Activated naive CD4-positive, alpha-beta T cell treated with anti-CD3 and anti-CD28 coated beads for 36 hours (primary cell): ENCODE measurements at regions of chr18 and their contacts with region 1.

Region 1: GRCh38 chr18:12657684-12658425 is at the start of gene SPIRE1:
- DNase-seq: peak; percentile 34
- H3K4me3 Mint-ChIP-seq: peak within 1 kb of the TSS; percentile 76
- H3K27ac Mint-ChIP-seq: no peak within 1 kb of the TSS
- H3K4me1 Mint-ChIP-seq: peaks cover 7% of the 10 kb centered on the region
- H3K27me3 Mint-ChIP-seq: peaks cover 22% of the 10 kb centered on the region
- total RNA-seq, gene SPIRE1: 1.3 to 1.7 TPM

Region 2: GRCh38 chr18:12271376-12272235 is 386.2 kb before region 1 on chr18:
- CTCF ChIA-PET with region 1: no interaction called
- intact Hi-C with region 1: loop called (anchors 5 kb)
- DNase-seq: peak; percentile 68
- H3K4me3 Mint-ChIP-seq: peak overlapping the region; percentile 64
- H3K27ac Mint-ChIP-seq: no peak overlapping the region
- H3K4me1 Mint-ChIP-seq: no peaks in the 10 kb centered on the region
- H3K27me3 Mint-ChIP-seq: peaks cover 2% of the 10 kb centered on the region

Region 3: DNA sequence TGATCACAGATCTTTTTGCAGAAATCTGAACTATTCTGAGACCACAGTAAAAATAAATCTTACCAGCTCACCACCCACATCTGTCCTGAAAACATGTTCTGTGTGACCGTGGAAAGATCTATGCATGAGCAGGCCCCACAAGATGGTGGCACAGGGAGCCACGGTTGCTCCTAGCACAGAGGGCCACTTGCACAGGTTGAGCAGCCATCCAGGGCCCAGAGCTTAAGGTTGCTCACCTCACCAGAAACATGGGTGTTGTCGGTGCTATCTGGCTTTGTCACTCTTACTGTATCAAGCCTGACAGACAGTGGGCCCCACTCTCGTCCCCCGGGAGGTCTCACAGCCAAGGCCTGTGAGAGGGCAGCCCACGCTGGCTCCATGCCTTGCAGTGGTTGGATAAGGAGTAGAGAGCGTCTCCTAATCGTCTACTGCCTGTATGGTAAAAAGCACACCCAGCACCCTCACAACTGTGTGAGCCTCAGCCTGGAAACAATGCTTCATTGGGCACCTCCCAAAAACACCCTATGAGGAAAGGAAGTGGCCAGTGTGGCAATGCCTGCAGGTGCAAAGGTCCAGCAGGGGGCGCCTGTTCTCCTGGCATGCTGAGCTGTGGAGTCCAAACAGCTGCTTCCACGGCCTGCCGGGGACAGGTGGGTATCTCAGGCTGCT is 330.2 kb before region 1 on chr18:
- CTCF ChIA-PET with region 1: interaction called, 6 read pairs
- intact Hi-C with region 1: loop called (anchors 1 kb)
- DNase-seq: peak; percentile 87
- H3K4me3 Mint-ChIP-seq: no peak overlapping the region
- H3K27ac Mint-ChIP-seq: no peak overlapping the region
- H3K4me1 Mint-ChIP-seq: no peaks in the 10 kb centered on the region
- H3K27me3 Mint-ChIP-seq: no peaks in the 10 kb centered on the region

Region 4: DNA sequence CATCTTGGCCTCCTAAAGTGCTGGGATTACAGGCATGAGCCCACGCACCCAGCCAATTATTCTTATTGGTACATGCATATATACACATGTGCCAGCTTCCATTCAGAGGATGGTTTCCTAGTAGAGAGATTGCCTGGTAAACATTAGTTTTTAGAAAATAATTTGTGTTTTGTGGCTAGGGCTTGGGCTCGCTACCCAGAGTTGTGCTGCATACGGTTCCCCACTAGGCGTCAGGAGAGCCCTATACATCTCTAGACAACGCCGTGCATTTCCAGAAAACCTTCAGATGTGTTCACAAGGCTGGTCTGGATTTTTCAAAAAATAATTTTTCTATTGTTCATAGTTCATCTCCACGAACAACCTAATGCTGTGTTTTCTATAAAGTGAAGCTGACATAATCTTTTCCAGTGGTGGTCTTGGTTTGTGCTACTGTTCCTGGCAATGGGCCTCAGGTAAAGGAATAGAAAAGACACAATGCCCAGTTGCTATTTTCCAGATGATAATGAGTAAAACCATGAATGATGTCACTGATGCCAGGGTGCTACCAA is 266.2 kb before region 1 on chr18:
- CTCF ChIA-PET with region 1: interaction called, 54 read pairs
- intact Hi-C with region 1: loop called (anchors 1 kb)
- DNase-seq: peak; percentile 72
- H3K4me3 Mint-ChIP-seq: no peak overlapping the region
- H3K27ac Mint-ChIP-seq: no peak overlapping the region
- H3K4me1 Mint-ChIP-seq: no peaks in the 10 kb centered on the region
- H3K27me3 Mint-ChIP-seq: peaks cover 4% of the 10 kb centered on the region

Region 5: DNA sequence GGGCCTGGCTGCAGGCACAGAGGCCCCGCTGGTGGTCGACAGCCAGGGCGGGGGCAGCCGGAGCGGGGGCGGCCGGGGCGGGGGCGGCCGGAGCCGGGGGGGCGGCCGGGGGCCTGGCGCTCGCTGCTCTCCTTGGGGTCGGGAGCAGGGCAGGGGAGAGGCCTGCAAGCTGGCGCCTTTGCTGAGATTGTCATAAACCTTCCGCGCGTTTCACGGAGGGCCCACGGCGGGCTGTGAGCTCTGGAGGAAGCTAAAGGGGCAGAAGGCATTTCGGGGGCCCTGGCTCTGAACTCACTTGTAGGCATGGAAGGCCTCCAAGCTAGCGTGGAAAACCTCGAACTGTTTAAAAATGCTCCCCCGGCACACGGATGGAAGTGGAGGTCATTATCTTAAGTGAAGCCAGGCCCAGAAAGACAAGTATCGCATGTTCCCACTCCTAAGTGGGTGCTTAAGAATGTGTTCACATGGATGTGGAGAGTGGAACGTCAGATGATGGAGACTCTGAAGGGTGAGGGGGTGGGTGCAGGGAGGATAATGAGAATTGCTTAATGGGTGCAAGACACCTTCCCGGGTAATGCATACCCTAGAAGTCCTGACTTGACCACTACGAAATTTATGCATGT is 249.5 kb before region 1 on chr18:
- CTCF ChIA-PET with region 1: no interaction called
- intact Hi-C with region 1: loop called (anchors 5 kb)
- DNase-seq: no peak
- H3K4me3 Mint-ChIP-seq: peak overlapping the region; percentile 72
- H3K27ac Mint-ChIP-seq: no peak overlapping the region
- H3K4me1 Mint-ChIP-seq: peaks cover 13% of the 10 kb centered on the region
- H3K27me3 Mint-ChIP-seq: peaks cover 38% of the 10 kb centered on the region

Region 6: DNA sequence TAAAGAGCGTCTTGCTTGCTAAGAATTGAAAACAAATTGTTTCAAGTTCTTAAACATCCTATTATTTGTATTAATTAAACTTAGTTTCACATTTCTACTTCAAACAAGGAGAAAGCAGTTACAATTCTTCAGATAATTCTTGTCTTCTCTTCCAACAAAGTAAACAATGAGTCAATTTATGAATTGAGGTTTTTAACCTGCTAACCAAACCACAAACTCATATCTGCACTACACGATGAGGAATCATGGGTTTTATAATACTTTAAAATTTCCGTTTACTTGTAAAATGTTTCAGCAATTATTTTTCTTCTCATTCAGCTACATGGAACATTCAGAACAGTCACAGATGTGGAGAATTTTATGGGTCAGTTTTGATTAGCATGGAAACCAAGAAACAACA is 114.2 kb before region 1 on chr18:
- CTCF ChIA-PET with region 1: no interaction called
- intact Hi-C with region 1: loop called (anchors 2 kb)
- DNase-seq: no peak
- H3K4me3 Mint-ChIP-seq: no peak overlapping the region
- H3K27ac Mint-ChIP-seq: no peak overlapping the region
- H3K4me1 Mint-ChIP-seq: no peaks in the 10 kb centered on the region
- H3K27me3 Mint-ChIP-seq: no peaks in the 10 kb centered on the region